Left colon (tissue), 2 donors: ENCODE measurements at regions of chr12 and their contacts with region 1.

Region 1: DNA sequence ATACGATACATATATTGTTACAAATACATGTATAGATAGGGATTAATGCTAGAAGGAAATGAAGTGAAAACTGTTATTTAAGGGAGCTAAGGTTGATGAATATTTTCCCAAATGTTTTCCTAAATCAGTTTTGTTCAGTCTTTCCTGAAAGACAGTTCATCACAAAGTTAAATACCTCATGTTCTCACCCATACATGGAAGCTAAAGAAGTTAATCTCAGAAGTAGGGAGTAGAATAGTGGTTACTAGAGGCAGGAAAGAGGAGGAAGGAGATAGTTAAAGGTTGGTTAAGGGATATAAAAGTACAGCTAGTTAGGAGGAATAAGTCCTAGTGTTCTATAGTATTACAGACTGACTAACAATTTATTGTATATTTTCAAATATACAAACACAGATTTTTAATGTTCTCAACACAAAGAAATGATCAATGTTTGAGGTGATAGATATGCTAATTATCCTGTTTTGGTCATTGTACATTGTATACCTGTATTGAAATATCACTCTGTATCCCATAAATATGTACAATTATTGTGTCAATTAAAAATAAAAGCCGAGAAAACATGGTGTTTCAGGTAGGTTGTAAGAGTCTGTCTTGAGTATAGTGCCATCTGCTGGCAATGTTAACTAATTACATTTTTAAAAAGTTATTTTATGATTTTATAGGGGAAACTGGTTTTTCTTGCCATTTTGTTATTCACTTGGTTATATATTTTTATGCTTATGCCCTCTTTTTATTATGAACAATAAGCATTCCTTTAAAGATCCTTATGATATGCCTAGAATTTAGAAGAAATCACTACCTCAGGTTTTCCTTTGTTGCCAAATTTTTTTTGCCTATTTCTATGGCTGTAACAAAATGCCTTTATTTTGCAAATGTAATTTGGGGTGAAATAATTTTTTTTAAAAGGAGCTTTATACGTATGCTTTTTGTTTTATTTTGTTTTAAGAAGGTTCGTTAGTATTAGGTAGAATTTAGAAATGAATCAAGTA is 26.9 kb downstream of the ZDHHC17 start:
- DNase-seq: no peak
- ATAC-seq: peak; percentile 50

Region 2: DNA sequence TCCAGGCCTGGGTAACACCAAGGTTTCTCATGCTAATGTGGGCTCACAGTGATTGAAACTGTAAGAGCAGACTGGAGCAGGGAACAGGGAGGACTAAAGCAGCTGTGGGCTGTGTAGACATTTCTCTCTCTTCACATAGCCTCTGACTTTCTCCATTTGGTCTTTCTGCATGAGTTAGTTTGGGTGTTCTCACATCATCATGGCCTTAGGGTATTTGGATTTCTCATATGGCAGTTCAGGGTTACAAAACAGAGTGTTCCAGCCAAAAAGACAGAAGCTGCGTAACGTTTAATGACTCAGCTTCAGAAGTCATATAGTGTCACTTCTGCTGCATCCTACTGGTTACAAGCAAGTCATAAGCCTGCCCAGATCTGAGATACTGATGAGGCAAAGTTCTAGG is 179.3 kb before region 1 on chr12:
- intact Hi-C with region 1: loop called in 1 of 2 experiments (anchors 10 kb)
- DNase-seq: no peak
- ATAC-seq: no peak

Region 3: DNA sequence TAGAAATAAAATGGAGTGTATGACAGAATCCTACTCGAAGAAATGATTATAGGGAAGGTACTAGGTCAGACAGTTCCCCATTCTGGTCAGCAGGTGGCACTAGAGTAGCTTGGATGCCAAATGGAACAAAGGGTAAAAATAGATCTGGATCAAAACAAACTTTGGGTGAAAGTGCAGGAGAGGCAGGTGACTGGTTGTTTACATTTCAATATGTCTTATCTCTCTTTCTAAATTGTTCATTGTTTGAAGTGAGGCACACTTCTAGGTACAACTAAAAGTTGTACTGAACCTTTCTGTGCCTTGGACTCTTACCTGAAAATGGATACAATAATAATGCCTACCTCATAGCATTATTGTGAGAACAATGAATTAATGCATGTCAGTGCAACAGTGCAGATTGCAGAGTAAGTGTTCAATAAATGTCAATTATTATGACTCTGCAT is 169.3 kb before region 1 on chr12:
- intact Hi-C with region 1: loop called (anchors 5 to 10 kb)
- DNase-seq: peak; percentile 56 to 77
- ATAC-seq: peak; percentile 78